ENCODE measurements at regions of chr5 and their contacts with region 1.

Region 1: DNA sequence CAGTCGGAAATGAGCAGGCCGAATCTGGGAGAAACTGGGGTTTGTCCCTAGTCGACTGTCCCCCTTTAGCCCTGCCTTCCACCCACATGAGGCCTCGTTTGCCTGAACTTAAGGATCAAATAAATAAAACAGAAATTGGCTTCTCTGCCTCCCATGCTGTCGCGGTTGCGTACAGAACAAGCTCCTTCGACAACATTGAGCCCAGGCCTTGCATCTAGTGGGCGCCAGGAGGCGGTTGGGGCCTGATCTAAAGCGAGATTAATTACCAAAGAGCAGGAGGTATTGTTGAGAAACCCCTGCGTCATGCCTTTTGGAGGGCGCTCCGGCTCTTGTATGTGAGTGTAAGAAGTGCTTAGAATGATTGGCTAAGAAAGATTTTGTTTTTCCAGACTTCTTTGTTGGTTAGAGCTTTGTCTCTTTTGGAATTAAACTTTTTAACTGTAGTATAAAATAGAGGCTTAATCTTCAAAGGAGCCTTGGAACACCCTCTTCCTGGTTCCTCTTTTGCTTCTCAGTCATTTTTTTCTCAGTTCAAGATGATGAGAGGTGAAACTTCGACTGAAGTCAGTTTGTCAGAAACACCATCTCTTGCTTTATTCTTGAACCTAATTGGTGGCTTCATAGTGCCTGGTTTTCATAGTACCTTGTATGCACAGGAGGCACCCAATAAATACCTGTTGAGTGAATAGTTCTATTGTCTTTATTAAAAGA is 827 bp downstream of the ATP6V0E1 start:
- DNase-seq: peak; percentile 84
- ATAC-seq: peak; percentile 80
- H3K4me3 Mint-ChIP-seq: peak overlapping the region; percentile 99
- H3K27ac Mint-ChIP-seq: peak overlapping the region; percentile 99
- H3K4me1 Mint-ChIP-seq: peaks cover 27% of the 10 kb centered on the region
- H3K27me3 Mint-ChIP-seq: no peaks in the 10 kb centered on the region

Region 2: GRCh38 chr5:172973127-172973916 is 11.1 kb before region 1 on chr5:
- CTCF ChIA-PET with region 1: interaction called, 7 read pairs
- POLR2A ChIA-PET with region 1: interaction called, 10 read pairs
- DNase-seq: no peak
- ATAC-seq: no peak
- H3K4me3 Mint-ChIP-seq: no peak overlapping the region
- H3K27ac Mint-ChIP-seq: no peak overlapping the region
- H3K4me1 Mint-ChIP-seq: no peaks in the 10 kb centered on the region
- H3K27me3 Mint-ChIP-seq: peaks cover 6% of the 10 kb centered on the region

Region 3: DNA sequence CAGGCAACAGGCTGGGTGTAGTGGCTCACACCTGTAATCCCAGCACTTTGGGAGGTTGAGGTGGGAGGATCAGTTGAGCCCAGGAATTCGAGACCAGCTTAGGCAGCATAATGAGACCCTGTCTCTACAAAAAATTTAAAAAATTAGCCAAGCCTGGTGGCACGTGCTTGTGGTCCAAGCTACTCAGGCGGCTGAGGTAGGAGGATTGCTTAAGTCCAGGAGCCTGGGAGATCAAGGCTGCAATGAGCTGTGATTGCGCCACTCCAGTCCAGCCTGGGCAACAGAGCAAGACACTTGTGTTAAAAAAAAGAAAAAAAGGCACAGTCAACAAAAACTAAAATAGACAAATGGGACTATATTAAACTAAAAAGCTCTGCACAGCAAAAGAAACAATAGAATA is 28.5 kb after region 1 on chr5:
- CTCF ChIA-PET with region 1: no interaction called
- POLR2A ChIA-PET with region 1: no interaction called
- DNase-seq: no peak
- ATAC-seq: no peak
- H3K4me3 Mint-ChIP-seq: no peak overlapping the region
- H3K27ac Mint-ChIP-seq: no peak overlapping the region
- H3K4me1 Mint-ChIP-seq: peaks cover 16% of the 10 kb centered on the region
- H3K27me3 Mint-ChIP-seq: no peaks in the 10 kb centered on the region

Region 4: DNA sequence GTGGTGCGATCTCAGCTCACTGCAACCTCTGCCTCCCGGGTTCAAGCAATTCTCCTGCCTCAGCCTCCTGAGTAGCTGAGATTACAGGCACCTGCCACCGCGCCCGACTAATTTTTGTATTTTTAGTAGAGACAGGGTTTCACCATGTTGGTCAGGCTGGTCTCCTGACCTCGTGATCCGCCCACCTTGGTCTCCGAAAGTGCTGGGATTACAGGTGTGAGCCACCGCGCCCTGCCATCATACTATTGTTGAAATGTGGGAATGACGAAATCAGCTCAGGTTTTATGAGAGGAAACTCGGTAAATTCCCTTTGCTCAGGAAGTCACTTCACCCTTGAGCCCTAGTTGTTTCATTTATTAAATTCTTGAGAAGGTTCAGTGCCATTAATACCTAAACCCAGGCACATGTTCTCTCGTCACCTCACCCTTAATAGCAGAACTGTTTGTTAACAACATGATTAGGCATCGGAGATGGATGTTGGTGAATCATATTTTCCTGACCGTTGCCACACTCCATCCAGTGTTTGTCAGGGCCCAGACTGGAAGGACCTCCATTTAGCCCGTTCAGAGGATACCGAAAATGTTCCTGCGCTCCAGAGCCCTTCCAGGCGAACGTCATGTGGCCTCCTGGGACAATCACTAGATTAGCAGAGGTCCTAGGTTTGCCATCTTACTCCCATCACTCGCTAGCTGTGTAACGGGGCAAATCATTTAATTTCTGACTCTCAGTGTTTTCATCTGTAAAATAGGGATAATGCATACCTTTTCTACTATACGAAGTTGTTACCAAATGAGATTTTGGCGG is 51.7 kb after region 1 on chr5:
- CTCF ChIA-PET with region 1: interaction called, 11 read pairs
- POLR2A ChIA-PET with region 1: interaction called, 12 read pairs
- DNase-seq: no peak
- ATAC-seq: no peak
- H3K4me3 Mint-ChIP-seq: peak overlapping the region; percentile 65
- H3K27ac Mint-ChIP-seq: peak overlapping the region; percentile 91
- H3K4me1 Mint-ChIP-seq: peaks cover 41% of the 10 kb centered on the region
- H3K27me3 Mint-ChIP-seq: no peaks in the 10 kb centered on the region

Region 5: GRCh38 chr5:173144200-173145176 is 160.1 kb after region 1 on chr5 and contains the start of gene BNIP1:
- CTCF ChIA-PET with region 1: interaction called, 25 read pairs
- POLR2A ChIA-PET with region 1: interaction called, 25 read pairs
- DNase-seq: peak; percentile 97
- ATAC-seq: peak; percentile 94
- H3K4me3 Mint-ChIP-seq: peak within 1 kb of the TSS; percentile 98
- H3K27ac Mint-ChIP-seq: peak within 1 kb of the TSS; percentile 99
- H3K4me1 Mint-ChIP-seq: peaks cover 16% of the 10 kb centered on the region
- H3K27me3 Mint-ChIP-seq: no peaks in the 10 kb centered on the region
- total RNA-seq, gene BNIP1: 14.3 to 14.5 TPM

Measured in activated CD8-positive, alpha-beta T cell treated with anti-CD3 and anti-CD28 coated beads, Interleukin-2, amount 10 ng/mL, durations not matched to agents 7 days and 5 days (primary cell).